ENCODE measurements at regions of chr15 and their contacts with region 1.

Region 1: DNA sequence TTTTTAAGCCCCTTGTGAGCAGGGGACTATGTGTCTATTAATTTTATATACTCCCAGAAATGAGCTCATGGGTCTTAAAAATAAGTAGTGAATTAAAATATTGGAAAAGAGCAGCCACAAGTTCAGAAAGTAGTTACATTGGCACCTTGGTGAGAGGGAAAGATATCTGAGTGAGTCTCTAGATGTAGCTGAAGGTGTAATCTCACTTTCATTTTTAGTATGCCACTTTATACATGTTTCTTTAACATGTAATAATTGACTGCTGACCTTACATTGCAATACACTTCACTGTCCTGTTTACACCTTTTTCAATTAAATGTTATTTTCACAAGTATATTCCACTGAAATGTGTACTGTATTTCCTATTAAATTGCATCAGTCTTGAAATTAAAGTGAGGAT is 12.1 kb upstream of the PAK6 start:
- DNase-seq: no peak
- ATAC-seq: no peak
- H3K4me3 ChIP-seq: no peak overlapping the region
- H3K27ac ChIP-seq: no peak overlapping the region
- H3K4me1 ChIP-seq: no peaks in the 10 kb centered on the region
- H3K27me3 ChIP-seq: no peaks in the 10 kb centered on the region
- CTCF ChIP-seq: no peak
- POLR2A ChIP-seq: no peak

Region 2: DNA sequence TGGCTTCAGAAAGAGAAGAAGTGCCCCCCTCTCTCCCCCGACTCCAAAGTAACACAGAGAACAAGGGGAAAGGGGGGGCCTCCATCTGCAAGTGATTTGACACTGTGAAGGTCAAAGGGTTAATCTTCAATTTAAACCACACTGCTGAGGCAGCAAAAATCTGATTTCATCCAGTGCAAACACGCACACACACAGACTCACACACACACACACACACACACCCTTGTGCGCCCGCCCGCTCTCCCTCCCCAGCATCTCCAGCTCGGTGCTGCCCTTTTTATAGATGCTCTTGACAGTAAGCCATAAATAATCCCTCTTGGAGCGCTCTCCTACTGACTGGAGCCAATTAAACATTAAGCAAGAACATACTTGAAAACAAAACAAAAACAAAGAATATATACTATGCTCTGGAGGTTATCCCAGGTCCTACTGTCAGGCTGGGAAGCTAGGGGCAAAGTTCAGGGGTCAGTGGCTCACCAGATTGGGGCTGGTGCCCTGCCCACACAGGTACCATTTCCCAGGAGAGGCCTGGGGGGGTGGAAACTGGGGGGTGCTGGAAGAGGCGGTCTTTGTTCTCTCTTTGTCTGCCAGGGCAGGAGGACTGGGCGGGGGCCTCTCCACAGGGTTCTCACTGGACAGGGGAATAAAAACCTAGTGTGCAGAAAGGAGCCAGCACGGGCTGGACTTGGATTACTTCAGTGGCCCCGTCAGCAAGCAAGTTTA is 134.3 kb before region 1 on chr15:
- in situ Hi-C with region 1: no loop called
- intact Hi-C with region 1: no loop called
- DNase-seq: peak; percentile 63 to 78
- ATAC-seq: peak; percentile 72 to 74
- H3K4me3 ChIP-seq: peak overlapping the region in 1 of 4 donors; percentile 37
- H3K27ac ChIP-seq: peak overlapping the region; percentile 77 to 90 (median 88)
- H3K4me1 ChIP-seq: peaks cover 70 to 74% of the 10 kb centered on the region in 2 donors
- H3K27me3 ChIP-seq: no peaks in the 10 kb centered on the region
- CTCF ChIP-seq: no peak
- POLR2A ChIP-seq: peak in 1 of 2 donors; percentile 11

Region 3: DNA sequence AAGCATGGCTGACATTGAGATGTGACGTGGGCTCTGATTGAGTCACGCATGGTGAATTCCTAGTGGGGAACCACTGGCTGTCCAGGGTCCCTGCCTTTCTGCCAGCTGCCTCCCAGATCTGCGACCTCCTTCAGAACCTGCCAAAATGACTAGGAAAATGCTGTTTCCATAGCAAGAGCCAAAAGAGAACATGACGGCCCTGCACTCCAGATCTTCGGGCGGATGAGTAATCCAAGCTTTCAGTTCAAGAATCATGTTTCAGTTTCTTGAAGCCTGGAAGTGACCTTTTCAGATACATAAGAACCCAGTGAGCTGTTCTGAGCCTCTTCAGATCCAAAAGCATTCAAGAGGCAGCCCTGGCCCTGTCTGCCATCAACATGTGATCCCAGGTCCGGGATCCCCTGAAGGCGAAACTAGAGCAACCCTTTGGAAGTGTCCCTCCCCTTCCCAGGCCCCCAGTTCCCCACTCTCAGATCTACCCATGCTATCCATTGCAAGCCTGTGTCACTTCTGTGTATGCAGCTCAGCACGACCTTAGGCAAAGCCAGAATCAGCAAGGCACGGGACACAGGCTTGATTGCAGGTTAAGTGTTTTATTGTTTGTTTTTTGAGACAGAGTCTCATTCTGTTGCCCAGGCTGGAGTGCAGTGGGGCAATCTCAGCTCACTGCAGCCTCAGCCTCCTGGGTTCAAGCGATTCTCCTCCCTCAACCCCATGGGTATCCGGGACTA is 36.5 kb after region 1 on chr15:
- in situ Hi-C with region 1: no loop called
- intact Hi-C with region 1: loop called (anchors 5 kb)
- DNase-seq: no peak
- ATAC-seq: peak; percentile 62 to 82
- H3K4me3 ChIP-seq: no peak overlapping the region
- H3K27ac ChIP-seq: peak overlapping the region in 2 of 4 donors; percentile 7 to 49
- H3K4me1 ChIP-seq: peaks cover 0 to 8% of the 10 kb centered on the region in 2 donors
- H3K27me3 ChIP-seq: no peaks in the 10 kb centered on the region
- CTCF ChIP-seq: no peak
- POLR2A ChIP-seq: no peak